Activated CD8-positive, alpha-beta T cell treated with anti-CD3 and anti-CD28 coated beads, Interleukin-2, amount 10 ng/mL, durations not matched to agents 7 days and 5 days (primary cell): ENCODE measurements at regions of chr14 and their contacts with region 1.

Region 1: GRCh38 chr14:95515596-95516552 is 576 bp downstream of the SYNE3 start:
- DNase-seq: peak; percentile 86
- ATAC-seq: peak; percentile 85
- H3K4me3 Mint-ChIP-seq: peak overlapping the region; percentile 91
- H3K27ac Mint-ChIP-seq: peak overlapping the region; percentile 85
- H3K4me1 Mint-ChIP-seq: peaks cover 66% of the 10 kb centered on the region
- H3K27me3 Mint-ChIP-seq: no peaks in the 10 kb centered on the region

Region 2: GRCh38 chr14:95534299-95535225 is 18.7 kb after region 1 on chr14 and contains the start of gene GLRX5:
- CTCF ChIA-PET with region 1: interaction called, 199 read pairs
- POLR2A ChIA-PET with region 1: interaction called, 47 read pairs
- DNase-seq: peak; percentile 99
- ATAC-seq: peak; percentile 91
- H3K4me3 Mint-ChIP-seq: peak within 1 kb of the TSS; percentile 91
- H3K27ac Mint-ChIP-seq: peak within 1 kb of the TSS; percentile 89
- H3K4me1 Mint-ChIP-seq: peaks cover 67% of the 10 kb centered on the region
- H3K27me3 Mint-ChIP-seq: no peaks in the 10 kb centered on the region
- total RNA-seq, gene GLRX5: 52.8 to 54.6 TPM

Region 3: GRCh38 chr14:95685978-95686937 is 170.4 kb after region 1 on chr14 and contains the start of gene TCL1B:
- CTCF ChIA-PET with region 1: no interaction called
- POLR2A ChIA-PET with region 1: no interaction called
- DNase-seq: no peak
- ATAC-seq: no peak
- H3K4me3 Mint-ChIP-seq: no peak within 1 kb of the TSS
- H3K27ac Mint-ChIP-seq: no peak within 1 kb of the TSS
- H3K4me1 Mint-ChIP-seq: no peaks in the 10 kb centered on the region
- H3K27me3 Mint-ChIP-seq: peaks cover 2% of the 10 kb centered on the region
- total RNA-seq, gene TCL1B: not detected